HAP-1 (cell line): ENCODE measurements at regions of chr4 and their contacts with region 1.

Region 1: GRCh38 chr4:87848622-87849351 is 16.0 kb downstream of the MEPE start:
- DNase-seq: peak; percentile 61 to 80
- H3K4me3 ChIP-seq: no peak overlapping the region
- H3K4me1 ChIP-seq: peaks cover 2% of the 10 kb centered on the region; the same call in 1 of the 2 replicates
- H3K27me3 ChIP-seq: peaks cover 30% of the 10 kb centered on the region

Region 2: DNA sequence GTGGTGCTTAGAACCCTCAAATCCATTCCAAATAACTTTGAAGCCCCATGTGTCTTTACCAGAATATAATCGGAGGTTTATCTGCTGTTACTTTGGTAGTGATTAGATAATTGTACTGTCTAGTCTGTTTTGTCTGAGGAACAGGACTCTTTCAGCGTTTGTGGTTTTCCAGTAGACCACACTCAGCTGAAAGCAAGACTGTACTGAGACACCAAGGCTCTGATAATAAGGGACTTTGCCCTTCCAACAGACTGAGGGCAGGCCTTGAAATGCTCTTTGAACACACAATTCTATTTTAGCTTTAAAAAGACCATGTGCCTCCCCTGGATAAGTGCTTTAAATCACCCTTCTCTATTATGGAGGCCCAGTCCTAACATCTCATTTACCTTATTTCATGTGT is 704.4 kb before region 1 on chr4:
- in situ Hi-C with region 1: loop called (anchors 25 kb)
- DNase-seq: no peak
- H3K4me3 ChIP-seq: no peak overlapping the region
- H3K4me1 ChIP-seq: no peaks in the 10 kb centered on the region
- H3K27me3 ChIP-seq: no peaks in the 10 kb centered on the region

Region 3: DNA sequence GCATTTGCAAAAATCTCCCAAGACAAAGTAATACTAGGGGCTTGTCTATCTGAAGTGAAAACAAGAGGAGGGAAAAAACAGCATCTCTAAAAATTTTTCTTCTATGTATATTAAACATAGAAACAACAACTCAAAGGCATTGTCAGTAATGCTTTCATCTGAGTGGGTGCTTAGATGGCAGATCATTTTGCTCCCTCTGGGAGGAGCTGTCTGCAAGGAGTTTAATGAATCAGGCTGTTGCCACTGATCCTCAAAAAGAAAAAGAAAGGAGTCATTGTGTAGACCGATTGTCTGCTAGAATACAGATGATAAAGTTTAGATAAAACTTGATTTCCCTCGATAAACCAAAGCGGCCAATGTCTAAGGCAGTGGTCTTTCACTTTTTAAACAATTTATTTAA is 578.6 kb before region 1 on chr4:
- in situ Hi-C with region 1: loop called (anchors 25 kb)
- DNase-seq: peak; percentile 51 to 84
- H3K4me3 ChIP-seq: no peak overlapping the region
- H3K4me1 ChIP-seq: 0 out of 2 replicates have a peak, but pooled peaks cover 3% of the 10 kb centered on the region
- H3K27me3 ChIP-seq: no peaks in the 10 kb centered on the region

Region 4: DNA sequence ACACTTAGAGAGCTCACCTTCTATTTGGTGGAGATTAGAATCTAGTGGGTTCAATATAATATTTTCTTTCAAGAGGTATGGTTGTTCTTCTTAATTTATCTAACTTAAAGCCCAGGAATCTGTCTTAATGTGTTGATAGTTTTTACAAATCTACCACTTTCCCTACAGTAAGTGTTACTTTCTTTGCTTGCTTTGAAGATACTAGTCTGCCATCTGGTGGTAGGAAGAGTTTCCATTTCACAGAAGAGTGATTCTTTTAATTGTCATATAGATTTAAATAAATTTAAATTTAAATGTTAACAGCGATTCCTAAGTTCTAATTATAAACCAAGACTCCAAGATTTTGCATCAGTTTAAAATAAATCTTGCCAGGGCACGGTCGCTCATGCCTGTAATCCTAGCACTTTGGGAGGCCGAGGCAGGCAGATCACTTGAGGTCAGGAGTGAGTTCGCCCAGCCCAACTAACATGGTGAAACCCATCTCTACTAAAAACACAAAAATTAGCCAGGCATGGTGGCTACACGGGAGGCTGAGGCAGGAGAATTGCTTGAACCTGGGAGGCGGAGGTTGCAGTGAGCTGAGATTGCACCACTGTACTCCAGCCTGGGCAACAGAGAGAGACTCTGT is 382.9 kb before region 1 on chr4:
- in situ Hi-C with region 1: loop called (anchors 25 kb)
- DNase-seq: peak in 1 of 2 experiments; percentile 61
- H3K4me3 ChIP-seq: no peak overlapping the region
- H3K4me1 ChIP-seq: no peaks in the 10 kb centered on the region
- H3K27me3 ChIP-seq: no peaks in the 10 kb centered on the region

Region 5: DNA sequence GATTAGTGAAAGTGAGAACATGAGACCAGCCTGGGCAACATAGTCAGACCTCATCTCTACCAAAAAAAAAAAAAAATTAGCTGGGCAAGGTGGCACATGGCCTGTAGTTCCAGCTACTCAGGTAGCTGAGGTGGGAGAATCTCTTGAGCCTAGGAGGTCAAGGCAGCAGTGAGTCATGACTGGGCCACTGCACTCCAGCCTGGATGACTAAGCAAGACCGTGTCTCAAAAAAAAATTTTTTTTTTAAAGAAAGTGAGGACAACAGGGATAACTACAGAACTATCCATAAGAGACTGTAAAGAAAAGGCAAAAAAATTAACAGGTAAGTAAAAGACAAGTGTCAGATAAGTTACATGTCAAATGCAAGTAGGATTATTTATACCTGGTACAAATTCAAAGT is 113.2 kb after region 1 on chr4:
- in situ Hi-C with region 1: loop called (anchors 10 kb)
- DNase-seq: no peak
- H3K4me3 ChIP-seq: no peak overlapping the region
- H3K4me1 ChIP-seq: no peaks in the 10 kb centered on the region
- H3K27me3 ChIP-seq: peaks cover 7% of the 10 kb centered on the region; the same call in 1 of the 2 replicates

Region 6: DNA sequence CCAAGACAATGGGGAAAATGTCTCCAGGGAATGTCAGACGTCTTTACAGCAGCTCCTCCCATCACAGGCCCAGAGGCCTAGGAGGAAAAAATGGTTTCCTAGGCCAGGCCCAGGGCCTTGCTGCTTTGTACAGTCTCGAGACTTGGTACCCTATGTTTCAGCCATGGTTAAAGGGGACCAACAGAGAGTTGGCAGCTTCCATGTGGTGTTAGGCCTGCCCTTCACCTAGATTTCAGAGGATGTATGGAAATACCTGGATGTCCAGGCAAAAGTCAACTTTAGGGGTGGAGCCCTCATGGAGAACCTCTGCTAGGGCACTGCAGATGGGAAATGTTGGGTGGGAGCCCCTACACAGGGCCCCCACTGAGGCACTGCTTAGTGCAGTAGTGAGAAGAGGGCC is 271.2 kb after region 1 on chr4:
- in situ Hi-C with region 1: no loop called
- DNase-seq: no peak
- H3K4me3 ChIP-seq: no peak overlapping the region
- H3K4me1 ChIP-seq: no peaks in the 10 kb centered on the region
- H3K27me3 ChIP-seq: no peaks in the 10 kb centered on the region

Region 7: DNA sequence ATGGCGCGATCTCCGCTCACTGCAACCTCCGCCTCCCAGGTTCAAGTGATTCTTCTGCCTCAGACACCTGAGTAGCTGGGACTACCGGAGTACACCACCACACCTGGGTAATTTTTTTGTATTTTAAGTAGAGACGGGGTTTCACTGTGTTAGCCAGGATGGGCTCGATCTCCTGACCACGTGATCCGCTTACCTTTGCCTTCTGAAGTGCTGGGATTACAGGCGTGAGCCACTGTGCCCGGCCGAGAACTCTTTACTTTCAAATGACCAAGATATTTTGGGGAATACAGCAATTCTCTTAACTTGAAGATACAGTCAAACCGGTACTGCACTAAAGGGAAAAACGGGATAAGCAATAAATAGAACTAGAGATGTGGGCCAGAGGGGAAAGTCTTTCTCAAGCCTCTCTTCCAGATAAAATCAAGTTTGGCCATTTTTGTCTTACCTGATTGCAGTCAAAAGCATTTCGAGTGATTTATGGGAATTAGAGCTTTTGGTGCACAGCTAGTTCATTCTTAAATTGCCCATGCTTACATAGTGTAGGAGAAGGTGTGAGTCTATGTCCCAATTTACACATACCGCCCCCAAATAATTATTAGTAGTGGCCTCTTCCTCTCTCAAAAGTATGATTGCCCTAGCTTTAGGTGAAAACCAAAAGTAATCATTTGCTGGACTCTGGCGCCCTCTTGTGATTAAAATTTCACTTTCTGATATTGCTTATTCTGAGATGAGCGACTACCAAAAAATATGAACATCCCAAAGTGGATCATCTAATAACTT is 362.9 kb after region 1 on chr4:
- in situ Hi-C with region 1: loop called (anchors 5 kb)
- DNase-seq: peak; percentile 28 to 64
- H3K4me3 ChIP-seq: no peak overlapping the region
- H3K4me1 ChIP-seq: no peaks in the 10 kb centered on the region
- H3K27me3 ChIP-seq: peaks cover 7% of the 10 kb centered on the region; the same call in 1 of the 2 replicates